AG04449 (cell line): ENCODE measurements at regions of chr2 and their contacts with region 1.

Region 1: DNA sequence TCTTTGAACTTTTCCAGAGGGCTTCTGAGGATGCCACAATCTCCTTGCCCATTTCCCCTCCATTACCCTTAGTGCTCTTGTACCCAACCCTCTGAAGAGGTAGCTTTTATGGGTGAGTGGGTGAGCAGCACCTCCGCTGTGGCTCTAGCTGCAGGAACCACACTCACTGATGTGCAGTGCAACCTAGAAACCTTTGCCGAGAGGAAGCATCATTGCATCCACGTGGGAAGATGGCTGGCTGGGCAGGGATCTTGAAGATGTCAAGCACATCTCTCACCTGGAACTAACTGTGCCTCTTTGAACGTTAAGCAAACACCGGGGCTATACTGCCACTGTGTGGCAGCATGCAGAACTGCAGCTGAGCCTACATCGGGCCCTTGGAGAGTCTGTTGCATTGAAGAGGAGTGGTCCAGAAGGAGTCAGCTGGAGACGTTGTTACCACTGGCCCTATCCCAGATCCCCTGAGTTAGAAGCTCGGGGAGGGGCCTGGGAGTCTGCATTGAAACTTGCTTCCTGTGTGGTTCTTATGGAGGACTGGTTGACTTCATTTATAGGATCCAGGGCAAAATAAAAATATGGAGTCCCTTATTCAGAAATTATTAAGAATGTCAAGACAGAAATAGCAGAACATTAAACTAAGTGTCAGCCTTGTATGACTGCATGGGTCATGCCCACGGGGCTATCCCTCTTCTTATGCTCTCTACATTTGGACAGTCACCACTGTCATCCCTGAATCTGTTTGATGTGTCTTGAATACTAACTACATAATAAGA is 28.7 kb downstream of the IGFBP5 start:
- DNase-seq: no peak
- H3K4me3 ChIP-seq: no peak overlapping the region
- CTCF ChIP-seq: peak; percentile 88

Region 2: GRCh38 chr2:216507220-216508160 is 159.2 kb before region 1 on chr2:
- CTCF ChIA-PET with region 1: interaction called, 69 read pairs
- POLR2A ChIA-PET with region 1: interaction called, 3 read pairs
- DNase-seq: no peak
- H3K4me3 ChIP-seq: no peak overlapping the region
- CTCF ChIP-seq: no peak

Region 3: DNA sequence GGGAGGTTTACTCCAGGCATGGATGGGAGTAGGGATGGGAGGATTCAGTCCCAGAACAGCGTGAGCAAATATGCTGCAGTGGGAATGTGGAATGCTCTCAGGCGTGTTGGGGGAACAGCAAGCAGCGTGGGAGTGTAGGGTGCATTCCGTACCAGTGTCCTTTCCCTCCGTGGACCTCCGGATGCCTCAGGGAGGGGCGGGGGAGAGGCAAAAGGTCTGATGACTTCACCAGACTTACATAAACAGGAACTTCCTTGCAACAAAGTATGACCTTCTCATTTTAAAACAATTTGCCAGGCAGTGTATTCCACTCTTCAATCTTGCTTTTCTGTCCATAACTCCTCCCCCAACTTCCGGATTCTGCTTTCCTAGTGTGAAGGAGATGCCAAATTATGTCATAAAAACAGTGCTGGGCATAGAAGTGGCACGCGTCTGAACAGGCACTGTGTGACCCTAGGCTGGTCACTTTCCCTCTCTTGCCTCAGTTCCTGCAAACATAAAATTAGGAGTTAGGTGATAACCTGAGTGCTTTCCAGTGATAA is 131.1 kb before region 1 on chr2:
- CTCF ChIA-PET with region 1: interaction called, 15 read pairs
- POLR2A ChIA-PET with region 1: no interaction called
- DNase-seq: peak; percentile 95
- H3K4me3 ChIP-seq: no peak overlapping the region
- CTCF ChIP-seq: no peak

Region 4: DNA sequence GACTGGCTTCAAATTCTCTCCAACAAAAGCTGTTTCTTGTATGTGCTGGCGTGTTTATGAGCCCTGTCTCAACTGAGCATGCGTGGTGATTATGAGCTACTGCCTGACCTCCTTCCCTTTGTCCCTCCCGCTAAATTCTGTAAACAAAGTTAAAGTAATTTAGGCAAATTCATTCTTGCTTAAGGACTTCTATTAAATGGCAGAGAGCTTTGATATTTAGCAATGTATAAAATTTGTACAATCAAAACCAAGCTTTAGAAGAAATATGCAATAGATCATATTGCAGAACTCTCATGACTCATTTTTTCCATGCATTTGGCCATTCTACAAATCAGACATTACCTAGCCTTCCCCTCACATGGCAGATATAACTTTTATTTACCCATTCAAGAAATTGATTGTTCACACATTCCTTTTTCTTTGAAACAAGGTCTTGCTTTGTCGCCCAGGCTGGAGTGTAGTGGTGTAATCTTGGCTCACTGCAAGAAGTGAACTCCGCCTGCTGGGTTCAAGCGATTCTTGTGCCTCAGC is 15.2 kb before region 1 on chr2:
- CTCF ChIA-PET with region 1: interaction called, 109 read pairs
- POLR2A ChIA-PET with region 1: no interaction called
- DNase-seq: peak; percentile 53
- H3K4me3 ChIP-seq: no peak overlapping the region
- CTCF ChIP-seq: no peak

Region 5: GRCh38 chr2:216687646-216688045 is 21.0 kb after region 1 on chr2:
- CTCF ChIA-PET with region 1: interaction called, 44 read pairs
- POLR2A ChIA-PET with region 1: no interaction called
- DNase-seq: no peak
- H3K4me3 ChIP-seq: no peak overlapping the region
- CTCF ChIP-seq: peak; percentile 37

Region 6: GRCh38 chr2:216713691-216714336 is 47.2 kb after region 1 on chr2:
- CTCF ChIA-PET with region 1: no interaction called
- POLR2A ChIA-PET with region 1: no interaction called
- DNase-seq: peak; percentile 89
- H3K4me3 ChIP-seq: no peak overlapping the region
- CTCF ChIP-seq: no peak

Region 7: DNA sequence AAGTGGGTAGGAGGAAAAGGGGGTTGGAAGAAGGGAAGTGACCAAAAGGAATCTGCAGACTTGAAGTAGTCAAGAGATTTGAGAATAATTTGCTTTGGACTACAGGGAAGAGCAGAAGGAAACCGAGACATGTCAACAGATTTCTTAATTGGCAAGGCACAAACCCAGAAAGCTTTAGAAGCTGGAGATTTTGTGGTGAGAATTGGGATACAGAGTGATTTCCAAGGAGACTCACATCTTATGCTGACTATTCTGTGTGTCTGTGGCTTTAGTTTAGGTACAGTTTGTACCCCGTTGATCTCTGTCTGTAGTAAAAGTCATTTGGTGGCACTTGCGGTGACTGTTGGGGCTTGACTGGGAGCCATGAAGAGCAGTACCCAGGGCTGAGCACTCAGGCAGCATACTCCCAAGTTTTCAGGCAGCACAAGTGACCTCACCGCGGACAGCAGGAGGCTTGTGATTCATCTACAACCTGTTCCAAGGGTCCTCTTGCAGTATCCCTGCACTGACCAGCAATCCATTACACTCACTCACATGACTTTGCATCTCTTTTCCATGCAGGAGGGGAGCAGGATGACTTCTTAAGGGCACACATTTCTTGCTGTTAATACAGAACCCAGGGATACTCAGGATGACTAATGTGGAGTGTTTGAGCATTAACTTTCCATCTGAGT is 290.3 kb after region 1 on chr2:
- CTCF ChIA-PET with region 1: no interaction called
- POLR2A ChIA-PET with region 1: no interaction called
- DNase-seq: no peak
- H3K4me3 ChIP-seq: no peak overlapping the region
- CTCF ChIP-seq: no peak